ENCODE measurements at regions of chr1 and their contacts with region 1.

Region 1: DNA sequence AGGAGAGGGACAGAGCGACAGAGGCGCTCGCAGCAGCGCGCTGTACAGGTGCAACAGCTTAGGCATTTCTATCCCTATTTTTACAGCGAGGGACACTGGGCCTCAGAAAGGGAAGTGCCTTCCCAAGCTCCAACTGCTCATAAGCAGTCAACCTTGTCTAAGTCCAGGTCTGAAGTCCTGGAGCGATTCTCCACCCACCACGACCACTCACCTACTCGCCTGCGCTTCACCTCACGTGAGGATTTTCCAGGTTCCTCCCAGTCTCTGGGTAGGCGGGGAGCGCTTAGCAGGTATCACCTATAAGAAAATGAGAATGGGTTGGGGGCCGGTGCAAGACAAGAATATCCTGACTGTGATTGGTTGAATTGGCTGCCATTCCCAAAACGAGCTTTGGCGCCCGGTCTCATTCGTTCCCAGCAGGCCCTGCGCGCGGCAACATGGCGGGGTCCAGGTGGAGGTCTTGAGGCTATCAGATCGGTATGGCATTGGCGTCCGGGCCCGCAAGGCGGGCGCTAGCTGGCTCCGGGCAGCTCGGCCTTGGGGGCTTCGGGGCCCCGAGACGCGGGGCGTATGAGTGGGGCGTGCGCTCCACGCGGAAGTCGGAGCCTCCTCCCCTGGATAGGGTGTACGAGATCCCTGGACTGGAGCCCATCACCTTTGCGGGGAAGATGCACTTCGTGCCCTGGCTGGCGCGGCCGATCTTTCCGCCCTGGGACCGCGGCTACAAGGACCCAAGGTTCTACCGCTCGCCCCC is at the starts of genes CYB5RL and MRPL37:
- H3K4me3 ChIP-seq: peak within 1 kb of the TSS; percentile 72
- H3K27ac ChIP-seq: peak within 1 kb of the TSS; percentile 61; the same call in 1 of the 2 replicates
- H3K4me1 ChIP-seq: peaks cover 5% of the 10 kb centered on the region
- CTCF ChIP-seq: no peak

Region 2: GRCh38 chr1:54180701-54181360 is 19.1 kb before region 1 on chr1:
- CTCF ChIA-PET with region 1: interaction called, 11 read pairs
- POLR2A ChIA-PET with region 1: interaction called, 3 read pairs
- H3K4me3 ChIP-seq: no peak overlapping the region
- H3K27ac ChIP-seq: no peak overlapping the region
- H3K4me1 ChIP-seq: no peaks in the 10 kb centered on the region
- CTCF ChIP-seq: no peak